ENCODE measurements at regions of chr6 and their contacts with region 1.

Region 1: DNA sequence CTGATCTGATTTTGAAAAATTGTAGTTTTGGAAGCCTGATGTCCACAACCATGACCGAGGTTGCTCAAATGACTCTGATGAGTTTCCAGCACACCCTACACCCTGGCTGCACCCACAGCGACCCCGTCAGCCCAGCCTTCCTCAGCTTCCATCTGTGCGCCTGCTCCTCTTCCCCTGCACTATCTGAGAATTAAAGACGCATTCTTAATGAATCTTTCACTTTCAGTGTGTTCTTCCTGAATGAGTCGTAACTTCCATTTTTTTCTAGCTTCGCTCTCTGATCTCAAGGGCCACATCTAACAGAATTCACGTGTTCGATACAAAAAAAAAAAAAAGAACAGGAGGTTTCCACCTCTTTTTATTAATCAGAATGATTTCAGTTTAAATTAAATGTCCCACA is 21.3 kb upstream of the RREB1 start:
- DNase-seq: peak in 8 of 9 donors; percentile 10 to 62 (median 56)
- ATAC-seq: peak; percentile 79
- H3K4me3 ChIP-seq: peak overlapping the region; percentile 29
- H3K4me3 Mint-ChIP-seq: peak overlapping the region; percentile 77 to 93 (median 83)
- H3K27ac ChIP-seq: peak overlapping the region; percentile 58
- H3K27ac Mint-ChIP-seq: peak overlapping the region; percentile 62 to 95 (median 89)
- H3K4me1 ChIP-seq: peaks cover 20 to 27% of the 10 kb centered on the region in 2 donors
- H3K4me1 Mint-ChIP-seq: peaks cover 21 to 42% (median 39%) of the 10 kb centered on the region in 7 donors
- H3K27me3 ChIP-seq: no peaks in the 10 kb centered on the region
- H3K27me3 Mint-ChIP-seq: peaks cover 0 to 65% (median 0%) of the 10 kb centered on the region in 5 donors

Region 2: GRCh38 chr6:6811151-6812002 is 275.1 kb before region 1 on chr6:
- CTCF ChIA-PET with region 1: no interaction called
- POLR2A ChIA-PET with region 1: interaction called, 3 read pairs
- intact Hi-C with region 1: loop called in 1 of 2 experiments (anchors 2 kb)
- DNase-seq: peak in 7 of 9 donors; percentile 54 to 90 (median 73)
- ATAC-seq: peak; percentile 79
- H3K4me3 ChIP-seq: peak overlapping the region; percentile 57
- H3K4me3 Mint-ChIP-seq: peak overlapping the region; percentile 80 to 97 (median 95)
- H3K27ac ChIP-seq: peak overlapping the region; percentile 85
- H3K27ac Mint-ChIP-seq: peak overlapping the region; percentile 86 to 100 (median 99)
- H3K4me1 ChIP-seq: no peaks in the 10 kb centered on the region
- H3K4me1 Mint-ChIP-seq: peaks cover 10 to 28% (median 23%) of the 10 kb centered on the region in 7 donors
- H3K27me3 ChIP-seq: no peaks in the 10 kb centered on the region
- H3K27me3 Mint-ChIP-seq: peaks cover 0 to 35% (median 0%) of the 10 kb centered on the region in 5 donors

Region 3: DNA sequence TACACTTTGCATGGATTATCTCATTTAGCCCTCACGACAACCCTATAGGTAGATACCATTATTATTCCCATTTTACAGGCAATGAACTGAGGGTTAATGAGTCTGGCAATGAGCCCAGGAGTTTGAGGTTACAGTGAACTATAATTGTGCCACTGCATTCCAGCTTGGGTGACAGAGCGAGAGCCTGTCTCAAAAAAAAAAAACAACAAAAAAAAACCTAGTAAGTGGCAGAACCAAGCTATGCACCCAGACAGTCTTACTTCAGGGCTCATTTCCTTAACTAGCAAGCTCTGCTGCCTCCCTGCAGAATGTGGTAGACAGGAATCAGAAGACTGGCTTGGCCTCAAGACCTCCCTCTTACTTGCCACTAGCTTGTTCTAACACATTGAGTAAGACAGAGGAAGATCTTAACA is 50.6 kb before region 1 on chr6:
- CTCF ChIA-PET with region 1: no interaction called
- POLR2A ChIA-PET with region 1: no interaction called
- intact Hi-C with region 1: no loop called
- DNase-seq: no peak
- ATAC-seq: no peak
- H3K4me3 ChIP-seq: no peak overlapping the region
- H3K4me3 Mint-ChIP-seq: no peak overlapping the region
- H3K27ac ChIP-seq: no peak overlapping the region
- H3K27ac Mint-ChIP-seq: no peak overlapping the region
- H3K4me1 ChIP-seq: no peaks in the 10 kb centered on the region
- H3K4me1 Mint-ChIP-seq: peaks cover 0 to 3% (median 0%) of the 10 kb centered on the region in 7 donors
- H3K27me3 ChIP-seq: no peaks in the 10 kb centered on the region
- H3K27me3 Mint-ChIP-seq: peaks cover 0 to 39% (median 0%) of the 10 kb centered on the region in 5 donors

Region 4: DNA sequence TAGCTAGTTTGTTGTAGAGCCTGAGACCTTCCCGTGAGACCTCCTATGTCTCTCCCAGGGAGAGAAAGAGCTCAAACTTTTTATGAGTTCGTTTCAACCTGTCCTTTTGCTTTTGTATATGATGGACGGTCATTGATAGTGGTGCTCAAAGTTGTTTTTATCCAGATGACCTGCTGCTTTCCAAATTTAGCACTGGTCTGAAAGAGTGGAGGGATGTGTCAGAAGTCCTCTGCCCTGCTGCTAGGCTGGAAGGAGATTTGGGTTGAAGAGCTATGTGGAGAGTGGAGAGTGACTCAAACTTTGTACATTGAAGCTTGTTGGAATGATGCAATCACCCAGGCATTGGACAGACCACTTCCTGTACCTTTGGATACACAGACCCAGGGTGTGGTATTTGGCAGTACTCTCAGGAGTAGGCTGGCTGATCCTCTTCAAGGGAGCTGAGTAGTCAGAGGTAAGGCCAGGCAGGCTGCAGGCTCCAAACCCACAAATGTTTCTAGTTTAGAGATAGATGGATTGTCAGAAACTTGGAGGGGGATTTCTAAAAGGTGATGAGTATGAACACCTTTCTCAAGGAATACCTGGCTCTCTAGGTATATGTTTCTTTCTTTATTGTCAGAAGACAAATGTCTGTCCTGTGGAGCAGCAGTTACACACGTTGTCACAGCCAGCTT is 28.1 kb before region 1 on chr6:
- CTCF ChIA-PET with region 1: no interaction called
- POLR2A ChIA-PET with region 1: interaction called, 23 read pairs
- intact Hi-C with region 1: no loop called
- DNase-seq: no peak
- ATAC-seq: no peak
- H3K4me3 ChIP-seq: no peak overlapping the region
- H3K4me3 Mint-ChIP-seq: no peak overlapping the region
- H3K27ac ChIP-seq: no peak overlapping the region
- H3K27ac Mint-ChIP-seq: no peak overlapping the region
- H3K4me1 ChIP-seq: no peaks in the 10 kb centered on the region
- H3K4me1 Mint-ChIP-seq: peaks cover 0 to 18% (median 7%) of the 10 kb centered on the region in 7 donors
- H3K27me3 ChIP-seq: no peaks in the 10 kb centered on the region
- H3K27me3 Mint-ChIP-seq: peaks cover 0 to 57% (median 0%) of the 10 kb centered on the region in 5 donors

Region 5: GRCh38 chr6:7100072-7100752 is 13.7 kb after region 1 on chr6:
- CTCF ChIA-PET with region 1: interaction called, 10 read pairs
- POLR2A ChIA-PET with region 1: interaction called, 15 read pairs
- intact Hi-C with region 1: no loop called
- DNase-seq: no peak
- ATAC-seq: no peak
- H3K4me3 ChIP-seq: no peak overlapping the region
- H3K4me3 Mint-ChIP-seq: no peak overlapping the region
- H3K27ac ChIP-seq: no peak overlapping the region
- H3K27ac Mint-ChIP-seq: no peak overlapping the region
- H3K4me1 ChIP-seq: no peaks in the 10 kb centered on the region
- H3K4me1 Mint-ChIP-seq: peaks cover 0 to 14% (median 5%) of the 10 kb centered on the region in 7 donors
- H3K27me3 ChIP-seq: no peaks in the 10 kb centered on the region
- H3K27me3 Mint-ChIP-seq: peaks cover 0 to 46% (median 0%) of the 10 kb centered on the region in 5 donors

Region 6: DNA sequence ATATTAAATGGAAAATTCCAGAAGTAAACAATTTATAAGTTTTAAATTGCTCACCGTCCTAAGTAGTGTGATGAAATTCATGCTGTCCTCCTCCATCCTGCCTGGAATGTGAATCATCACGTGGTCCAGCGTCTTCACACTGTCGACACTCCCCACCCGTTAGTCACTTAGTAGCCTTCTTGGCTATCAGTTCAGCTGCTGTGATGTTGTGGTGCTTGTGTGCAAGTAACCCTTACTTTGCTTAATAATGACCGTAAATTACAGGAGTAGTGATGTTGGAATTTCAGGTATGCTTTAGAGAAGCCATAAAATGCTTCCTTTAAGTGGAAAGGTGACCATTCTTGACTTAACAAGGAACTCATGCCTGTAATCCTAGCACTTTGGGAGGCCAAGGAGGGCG is 328.3 kb after region 1 on chr6:
- CTCF ChIA-PET with region 1: no interaction called
- POLR2A ChIA-PET with region 1: no interaction called
- intact Hi-C with region 1: no loop called
- DNase-seq: no peak
- ATAC-seq: no peak
- H3K4me3 ChIP-seq: no peak overlapping the region
- H3K4me3 Mint-ChIP-seq: no peak overlapping the region
- H3K27ac ChIP-seq: no peak overlapping the region
- H3K27ac Mint-ChIP-seq: peak overlapping the region in 1 of 9 donors; percentile 54
- H3K4me1 ChIP-seq: no peaks in the 10 kb centered on the region
- H3K4me1 Mint-ChIP-seq: peaks cover 0 to 9% (median 0%) of the 10 kb centered on the region in 7 donors
- H3K27me3 ChIP-seq: no peaks in the 10 kb centered on the region
- H3K27me3 Mint-ChIP-seq: no peaks in the 10 kb centered on the region